Activated CD8-positive, alpha-beta T cell treated with anti-CD3 and anti-CD28 coated beads for 36 hours (primary cell): ENCODE measurements at regions of chr12 and their contacts with region 1.

Region 1: DNA sequence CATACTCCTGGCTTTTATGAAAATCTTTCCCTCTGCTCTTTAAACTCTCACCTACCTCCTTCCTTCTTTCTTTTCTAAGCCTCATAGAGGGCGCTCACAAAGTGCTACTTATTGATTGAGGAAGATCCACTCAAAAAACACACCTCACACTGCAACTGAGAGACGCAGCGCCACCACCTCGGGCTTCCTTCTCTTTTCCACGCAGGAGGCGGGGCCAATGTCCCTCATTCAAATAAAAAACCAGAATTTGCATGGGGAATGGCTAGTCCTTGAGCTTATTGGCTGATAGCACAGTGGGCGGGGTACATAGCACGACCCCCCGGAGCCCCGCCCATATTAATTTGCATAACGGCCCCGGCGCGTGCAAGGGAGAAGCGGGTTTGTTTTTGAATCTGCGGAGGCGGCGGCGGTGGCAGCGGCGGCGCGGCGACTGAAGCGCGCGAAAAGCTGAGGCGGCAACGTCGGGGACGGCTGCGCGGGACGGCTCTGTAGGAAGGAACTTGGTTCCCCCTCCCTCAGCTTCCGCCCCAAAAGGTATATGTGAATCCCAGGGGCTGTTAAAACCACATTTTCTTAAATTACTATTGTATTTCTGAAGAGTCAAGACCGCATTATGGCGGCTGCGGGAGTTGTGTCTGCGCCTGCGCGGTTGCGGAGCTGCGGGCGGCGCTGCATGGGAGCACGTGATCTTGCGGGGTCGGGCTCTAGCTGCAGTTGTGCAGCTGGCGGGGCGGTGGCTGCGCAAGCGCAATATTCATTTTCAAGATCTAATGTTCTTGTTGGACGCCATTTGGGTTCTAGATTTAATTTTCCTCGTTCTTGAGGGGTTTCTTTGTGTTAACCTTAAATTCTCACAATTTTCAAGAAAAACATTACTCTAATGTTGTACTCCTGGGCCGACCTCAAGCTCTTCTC is at the start of gene ATF7IP:
- DNase-seq: peak; percentile 98
- ATAC-seq: peak; percentile 88
- H3K4me3 Mint-ChIP-seq: peak within 1 kb of the TSS; percentile 75
- H3K27ac Mint-ChIP-seq: peak within 1 kb of the TSS; percentile 97
- H3K4me1 Mint-ChIP-seq: peaks cover 31% of the 10 kb centered on the region
- H3K27me3 Mint-ChIP-seq: no peaks in the 10 kb centered on the region
- CTCF ChIP-seq: peak; percentile 32
- total RNA-seq, gene ATF7IP: 101 to 107 TPM

Region 2: DNA sequence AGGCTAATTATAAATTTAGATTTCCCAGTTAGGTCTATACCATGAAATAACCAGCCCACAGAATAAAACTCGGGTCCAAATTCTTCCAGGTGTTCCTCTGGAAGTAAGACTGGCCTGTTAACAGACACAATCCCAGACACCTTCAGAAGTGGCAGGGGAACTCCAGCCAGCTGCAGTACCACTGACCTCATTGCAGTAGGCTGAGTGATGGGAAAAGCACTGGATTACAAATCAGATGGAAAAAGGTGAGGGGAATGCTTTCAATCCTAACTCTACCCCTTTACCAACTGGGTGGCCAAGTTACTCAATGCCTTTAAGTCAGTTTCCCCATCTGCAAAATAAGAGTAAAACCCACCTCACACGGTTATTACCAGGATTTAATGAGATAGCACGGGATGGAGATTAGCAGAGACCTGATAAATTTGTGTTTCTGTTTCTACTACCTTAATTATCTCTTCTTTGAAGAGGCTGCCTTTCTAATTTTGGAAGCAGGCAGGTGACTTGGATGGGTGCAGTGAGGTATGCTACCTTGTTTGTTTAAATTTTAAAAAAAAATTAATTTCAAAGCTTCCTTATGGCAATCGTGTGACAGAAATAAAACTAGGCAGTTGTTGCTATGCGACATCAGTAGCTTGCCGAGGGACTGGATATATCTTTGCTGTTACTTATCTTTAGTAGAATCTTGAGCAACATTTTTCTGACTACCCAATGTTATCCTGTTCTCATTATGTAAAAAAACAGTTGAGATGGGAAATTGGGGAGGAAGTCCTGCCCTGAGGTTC is 216.9 kb before region 1 on chr12:
- CTCF ChIA-PET with region 1: no interaction called
- POLR2A ChIA-PET with region 1: no interaction called
- intact Hi-C with region 1: no loop called
- DNase-seq: no peak
- ATAC-seq: no peak
- H3K4me3 Mint-ChIP-seq: no peak overlapping the region
- H3K27ac Mint-ChIP-seq: no peak overlapping the region
- H3K4me1 Mint-ChIP-seq: no peaks in the 10 kb centered on the region
- H3K27me3 Mint-ChIP-seq: peaks cover 1% of the 10 kb centered on the region
- CTCF ChIP-seq: no peak

Region 3: GRCh38 chr12:14257734-14258574 is 107.6 kb before region 1 on chr12:
- CTCF ChIA-PET with region 1: interaction called, 18 read pairs
- POLR2A ChIA-PET with region 1: interaction called, 13 read pairs
- intact Hi-C with region 1: loop called (anchors 2 kb)
- DNase-seq: peak; percentile 95
- ATAC-seq: peak; percentile 78
- H3K4me3 Mint-ChIP-seq: peak overlapping the region; percentile 52
- H3K27ac Mint-ChIP-seq: peak overlapping the region; percentile 92
- H3K4me1 Mint-ChIP-seq: peaks cover 46% of the 10 kb centered on the region
- H3K27me3 Mint-ChIP-seq: no peaks in the 10 kb centered on the region
- CTCF ChIP-seq: no peak

Region 4: GRCh38 chr12:14314801-14315200 is 50.8 kb before region 1 on chr12:
- CTCF ChIA-PET with region 1: no interaction called
- POLR2A ChIA-PET with region 1: no interaction called
- intact Hi-C with region 1: no loop called
- DNase-seq: no peak
- ATAC-seq: no peak
- H3K4me3 Mint-ChIP-seq: no peak overlapping the region
- H3K27ac Mint-ChIP-seq: no peak overlapping the region
- H3K4me1 Mint-ChIP-seq: no peaks in the 10 kb centered on the region
- H3K27me3 Mint-ChIP-seq: no peaks in the 10 kb centered on the region
- CTCF ChIP-seq: no peak

Region 5: DNA sequence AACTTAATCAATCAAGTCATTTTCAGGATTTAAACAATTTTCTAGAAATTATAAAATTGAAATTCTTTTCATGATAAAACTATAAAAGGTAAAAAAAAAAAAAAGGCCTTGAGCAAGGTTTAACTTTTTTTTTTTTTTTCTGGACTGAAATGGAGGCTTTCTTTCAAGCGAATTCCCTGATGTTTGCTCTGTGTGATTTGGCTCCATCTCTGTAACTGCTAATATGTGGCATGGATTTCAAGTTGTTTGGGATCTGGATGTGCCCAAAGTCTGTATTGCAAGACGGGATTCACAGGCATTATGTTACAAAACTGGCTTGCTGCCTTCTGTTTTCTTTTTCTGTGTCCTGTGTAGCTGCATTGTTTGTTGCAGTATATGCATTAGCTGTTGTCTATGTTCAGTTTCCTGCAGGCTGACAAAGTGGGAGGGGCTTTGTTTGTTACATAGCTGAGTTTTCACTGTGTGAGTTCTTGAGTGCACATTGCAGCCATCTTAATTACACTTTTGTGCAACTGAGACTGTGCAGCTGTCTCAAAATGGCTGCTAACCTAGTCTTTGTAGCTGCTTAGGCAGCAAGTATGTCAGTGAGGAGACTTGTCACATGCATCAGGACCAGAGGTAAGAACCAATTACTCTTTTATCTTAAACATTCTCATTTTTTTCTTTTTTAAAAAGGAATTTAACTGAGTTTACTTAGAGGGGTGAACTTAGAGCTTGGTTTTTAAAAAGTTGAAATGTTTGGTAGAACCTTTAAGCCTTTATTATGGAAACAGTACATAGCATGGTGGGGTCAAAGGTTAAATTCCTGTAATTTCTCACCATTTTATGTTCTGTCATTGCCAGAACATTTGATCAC is 19.5 kb after region 1 on chr12:
- CTCF ChIA-PET with region 1: interaction called, 35 read pairs
- POLR2A ChIA-PET with region 1: interaction called, 55 read pairs
- intact Hi-C with region 1: loop called (anchors 1 kb)
- DNase-seq: peak; percentile 81
- ATAC-seq: peak; percentile 95
- H3K4me3 Mint-ChIP-seq: peak overlapping the region; percentile 74
- H3K27ac Mint-ChIP-seq: peak overlapping the region; percentile 96
- H3K4me1 Mint-ChIP-seq: peaks cover 56% of the 10 kb centered on the region
- H3K27me3 Mint-ChIP-seq: no peaks in the 10 kb centered on the region
- CTCF ChIP-seq: no peak

Region 6: GRCh38 chr12:14417715-14418114 is 52.2 kb after region 1 on chr12:
- CTCF ChIA-PET with region 1: interaction called, 22 read pairs
- POLR2A ChIA-PET with region 1: interaction called, 5 read pairs
- intact Hi-C with region 1: loop called (anchors 2 kb)
- DNase-seq: peak; percentile 90
- ATAC-seq: peak; percentile 82
- H3K4me3 Mint-ChIP-seq: peak overlapping the region; percentile 63
- H3K27ac Mint-ChIP-seq: peak overlapping the region; percentile 91
- H3K4me1 Mint-ChIP-seq: peaks cover 59% of the 10 kb centered on the region
- H3K27me3 Mint-ChIP-seq: no peaks in the 10 kb centered on the region
- CTCF ChIP-seq: no peak